ENCODE measurements at regions of chr3 and their contacts with region 1.

Region 1: DNA sequence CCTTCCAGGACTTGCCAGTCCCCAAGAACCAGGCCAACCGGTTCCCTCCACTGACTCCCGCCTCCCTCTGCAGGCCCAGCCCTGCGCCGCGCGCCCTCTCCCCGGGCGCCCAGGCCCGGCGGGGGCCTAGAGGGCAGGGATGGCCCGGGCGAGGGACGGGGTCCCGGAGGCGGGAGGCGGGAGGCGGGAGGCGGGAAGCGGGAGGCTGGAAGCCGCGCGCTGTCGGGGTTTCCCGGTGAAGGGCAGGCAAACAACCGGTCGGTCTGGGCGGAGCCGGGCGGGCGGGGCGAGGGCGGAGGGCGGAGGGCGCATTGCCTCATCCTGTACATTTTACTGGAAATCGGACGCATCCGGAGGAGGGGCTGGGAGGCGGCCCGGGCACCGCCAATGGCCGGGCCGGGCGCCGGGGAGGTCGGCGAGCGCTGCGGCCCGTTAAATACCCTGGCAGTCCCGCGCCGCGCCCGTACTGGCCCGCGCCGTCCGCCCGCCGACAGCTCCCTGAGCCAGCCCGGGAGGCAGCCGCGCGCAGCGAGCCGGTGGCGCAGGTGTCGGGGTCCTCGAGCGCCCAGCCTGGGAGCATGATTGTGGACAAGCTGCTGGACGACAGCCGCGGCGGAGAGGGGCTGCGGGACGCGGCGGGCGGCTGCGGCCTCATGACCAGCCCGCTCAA is at the start of gene NFKBIZ:
- DNase-seq: peak; percentile 85 to 96 (median 91)
- ATAC-seq: peak; percentile 73
- H3K4me3 ChIP-seq: peak within 1 kb of the TSS; percentile 75 to 92
- H3K4me3 Mint-ChIP-seq: peak within 1 kb of the TSS; percentile 96
- H3K27ac ChIP-seq: peak within 1 kb of the TSS; percentile 94 to 96
- H3K27ac Mint-ChIP-seq: peak within 1 kb of the TSS; percentile 97
- H3K4me1 ChIP-seq: peaks cover 30% of the 10 kb centered on the region
- H3K4me1 Mint-ChIP-seq: peaks cover 39% of the 10 kb centered on the region
- H3K27me3 ChIP-seq: no peaks in the 10 kb centered on the region
- H3K27me3 Mint-ChIP-seq: no peaks in the 10 kb centered on the region
- CTCF ChIP-seq: no peak
- total RNA-seq, gene NFKBIZ: 460 to 477 TPM

Region 2: GRCh38 chr3:101676765-101677435 is 172.3 kb before region 1 on chr3 and contains the start of gene ZBTB11:
- CTCF ChIA-PET with region 1: interaction called, 3 read pairs
- POLR2A ChIA-PET with region 1: interaction called, 22 read pairs
- intact Hi-C with region 1: loop called in 1 of 2 experiments (anchors 2 kb)
- DNase-seq: peak; percentile 99 to 100 (median 100)
- ATAC-seq: peak; percentile 63
- H3K4me3 ChIP-seq: peak within 1 kb of the TSS; percentile 90 to 100
- H3K4me3 Mint-ChIP-seq: peak within 1 kb of the TSS; percentile 95
- H3K27ac ChIP-seq: peak within 1 kb of the TSS; percentile 97 to 99
- H3K27ac Mint-ChIP-seq: peak within 1 kb of the TSS; percentile 98
- H3K4me1 ChIP-seq: peaks cover 26% of the 10 kb centered on the region
- H3K4me1 Mint-ChIP-seq: peaks cover 49% of the 10 kb centered on the region
- H3K27me3 ChIP-seq: no peaks in the 10 kb centered on the region
- H3K27me3 Mint-ChIP-seq: no peaks in the 10 kb centered on the region
- CTCF ChIP-seq: no peak
- total RNA-seq, gene ZBTB11: 69.6 to 75.2 TPM

Region 3: GRCh38 chr3:101724329-101725193 is 124.6 kb before region 1 on chr3 and contains the start of gene CEP97:
- CTCF ChIA-PET with region 1: no interaction called
- POLR2A ChIA-PET with region 1: interaction called, 18 read pairs
- intact Hi-C with region 1: no loop called
- DNase-seq: peak; percentile 67 to 92 (median 87)
- ATAC-seq: peak; percentile 94
- H3K4me3 ChIP-seq: peak within 1 kb of the TSS; percentile 82 to 99
- H3K4me3 Mint-ChIP-seq: peak within 1 kb of the TSS; percentile 100
- H3K27ac ChIP-seq: peak within 1 kb of the TSS; percentile 62 to 83
- H3K27ac Mint-ChIP-seq: peak within 1 kb of the TSS; percentile 98
- H3K4me1 ChIP-seq: peaks cover 29% of the 10 kb centered on the region
- H3K4me1 Mint-ChIP-seq: peaks cover 37% of the 10 kb centered on the region
- H3K27me3 ChIP-seq: no peaks in the 10 kb centered on the region
- H3K27me3 Mint-ChIP-seq: no peaks in the 10 kb centered on the region
- CTCF ChIP-seq: no peak
- total RNA-seq, gene CEP97: 3.4 to 5.3 TPM

Region 4: DNA sequence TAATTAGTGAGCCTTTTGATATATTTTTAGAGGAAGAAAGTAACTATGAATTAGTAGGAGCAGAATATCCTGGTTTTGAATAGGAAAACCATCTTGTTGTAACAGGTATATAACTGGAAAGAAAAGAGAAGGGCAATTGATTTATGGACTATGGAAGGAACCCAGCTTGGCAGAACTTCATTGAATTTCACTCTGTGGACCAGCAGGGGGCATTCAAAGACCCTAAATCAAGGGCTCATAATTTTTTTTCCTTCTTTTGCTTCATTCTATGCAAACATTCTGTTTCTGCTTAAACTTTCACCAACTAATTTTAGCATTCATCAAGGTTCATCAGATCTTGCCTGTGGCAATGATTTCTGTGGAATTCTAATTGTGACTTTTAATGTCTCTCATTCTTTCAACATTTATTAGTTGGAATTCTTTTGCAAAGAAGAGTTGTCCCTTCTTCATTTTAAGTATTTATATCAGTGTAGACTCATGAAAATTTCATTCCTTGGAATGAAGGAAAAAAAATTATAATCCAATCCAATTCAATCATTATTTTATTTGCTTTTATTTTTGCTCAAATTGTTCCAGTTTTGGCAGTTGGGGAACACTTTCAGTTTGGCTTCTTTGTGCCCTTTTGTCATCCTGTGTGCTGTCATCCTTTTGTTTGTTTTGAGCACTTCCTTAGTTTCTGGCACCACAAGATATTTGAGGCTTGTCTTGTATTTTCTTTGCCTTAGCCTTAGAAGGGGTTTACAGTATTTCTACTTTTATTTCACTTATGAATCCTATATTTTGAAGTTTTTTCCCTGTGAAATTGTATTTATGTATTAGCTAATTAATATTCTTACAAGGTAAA is 39.8 kb before region 1 on chr3:
- CTCF ChIA-PET with region 1: interaction called, 5 read pairs
- POLR2A ChIA-PET with region 1: interaction called, 13 read pairs
- intact Hi-C with region 1: loop called (anchors 1 to 5 kb)
- DNase-seq: peak in 6 of 9 experiments; percentile 14 to 77 (median 39)
- ATAC-seq: peak; percentile 78
- H3K4me3 ChIP-seq: no peak overlapping the region
- H3K4me3 Mint-ChIP-seq: peak overlapping the region; percentile 2
- H3K27ac ChIP-seq: peak overlapping the region in 1 of 2 experiments; percentile 17
- H3K27ac Mint-ChIP-seq: peak overlapping the region; percentile 79
- H3K4me1 ChIP-seq: peaks cover 14% of the 10 kb centered on the region
- H3K4me1 Mint-ChIP-seq: peaks cover 36% of the 10 kb centered on the region
- H3K27me3 ChIP-seq: no peaks in the 10 kb centered on the region
- H3K27me3 Mint-ChIP-seq: no peaks in the 10 kb centered on the region
- CTCF ChIP-seq: peak; percentile 73

Region 5: DNA sequence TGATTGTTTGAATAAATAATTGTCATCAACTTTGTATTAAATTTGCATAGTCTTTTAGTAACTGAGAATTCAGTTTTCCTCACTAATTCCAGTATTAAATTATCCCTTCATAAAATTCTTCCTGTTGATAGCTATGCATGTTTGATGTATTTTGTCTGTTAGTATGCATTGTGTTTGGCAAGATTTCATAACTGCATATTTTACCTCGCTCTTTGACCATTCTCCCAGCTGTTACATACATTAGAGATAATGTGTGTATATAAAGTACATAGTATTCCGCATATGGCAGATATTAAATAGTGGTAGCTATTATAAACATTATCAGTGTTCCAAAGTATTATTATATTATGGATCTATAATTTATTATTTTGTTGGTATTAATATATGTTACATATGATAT is 10.5 kb before region 1 on chr3:
- CTCF ChIA-PET with region 1: interaction called, 4 read pairs
- POLR2A ChIA-PET with region 1: interaction called, 14 read pairs
- intact Hi-C with region 1: no loop called
- DNase-seq: no peak
- ATAC-seq: no peak
- H3K4me3 ChIP-seq: no peak overlapping the region
- H3K4me3 Mint-ChIP-seq: no peak overlapping the region
- H3K27ac ChIP-seq: no peak overlapping the region
- H3K27ac Mint-ChIP-seq: no peak overlapping the region
- H3K4me1 ChIP-seq: no peaks in the 10 kb centered on the region
- H3K4me1 Mint-ChIP-seq: peaks cover 9% of the 10 kb centered on the region
- H3K27me3 ChIP-seq: no peaks in the 10 kb centered on the region
- H3K27me3 Mint-ChIP-seq: no peaks in the 10 kb centered on the region
- CTCF ChIP-seq: no peak

Region 6: GRCh38 chr3:102113411-102114041 is 264.3 kb after region 1 on chr3:
- CTCF ChIA-PET with region 1: no interaction called
- POLR2A ChIA-PET with region 1: interaction called, 9 read pairs
- intact Hi-C with region 1: loop called in 1 of 2 experiments (anchors 10 kb)
- DNase-seq: peak in 1 of 9 experiments; percentile 7
- ATAC-seq: no peak
- H3K4me3 ChIP-seq: no peak overlapping the region
- H3K4me3 Mint-ChIP-seq: no peak overlapping the region
- H3K27ac ChIP-seq: peak overlapping the region; percentile 28 to 34
- H3K27ac Mint-ChIP-seq: peak overlapping the region; percentile 94
- H3K4me1 ChIP-seq: peaks cover 25% of the 10 kb centered on the region
- H3K4me1 Mint-ChIP-seq: peaks cover 31% of the 10 kb centered on the region
- H3K27me3 ChIP-seq: no peaks in the 10 kb centered on the region
- H3K27me3 Mint-ChIP-seq: no peaks in the 10 kb centered on the region
- CTCF ChIP-seq: no peak

Measured in CD8-positive, alpha-beta T cell (primary cell).